Posterior cingulate gyrus (tissue), 11 donors: ENCODE measurements at regions of chr14 and their contacts with region 1.

Region 1: GRCh38 chr14:33184587-33184986 is 245.9 kb downstream of the NPAS3 start:
- DNase-seq: peak in 3 of 10 donors; percentile 12 to 71 (median 32)

Region 2: DNA sequence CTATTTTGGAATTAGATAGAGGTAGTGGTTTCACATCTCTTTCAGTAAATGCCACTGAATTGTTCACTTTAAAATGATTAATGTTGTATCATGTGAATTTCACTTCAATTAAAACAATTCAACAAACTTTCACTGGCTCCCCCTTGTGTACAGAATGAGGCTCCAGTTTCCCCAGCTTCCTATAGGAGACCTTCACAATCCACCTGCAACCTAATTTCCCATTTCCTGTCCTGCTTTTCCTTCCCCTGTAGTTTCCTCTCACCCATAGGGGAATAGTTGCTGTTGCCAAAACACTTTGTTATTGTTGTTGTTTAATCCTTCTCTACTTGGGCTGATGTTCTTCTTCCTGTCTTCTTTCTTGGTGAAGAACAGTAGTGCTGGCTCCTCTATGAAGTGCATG is 186.2 kb before region 1 on chr14:
- intact Hi-C with region 1: no loop called
- DNase-seq: no peak

Region 3: DNA sequence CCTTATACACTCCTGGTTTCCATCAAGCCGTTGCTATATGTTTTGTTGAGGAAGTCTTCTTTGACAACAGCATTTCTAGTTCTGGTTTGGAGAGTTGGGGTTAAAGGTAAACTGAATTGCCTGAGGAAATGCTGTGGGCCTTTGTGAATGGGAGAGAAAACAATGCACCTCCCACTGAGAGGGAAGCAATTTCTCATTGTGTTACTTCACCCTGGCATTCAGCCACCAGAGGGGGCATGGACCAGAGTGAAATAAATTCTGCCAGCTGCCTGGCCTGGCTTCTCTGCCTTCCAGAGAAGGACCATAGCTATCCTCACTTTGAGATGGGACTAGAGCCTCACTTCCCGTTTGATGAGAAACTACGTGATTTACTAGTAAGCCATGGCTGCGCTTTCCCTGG is 291.0 kb after region 1 on chr14:
- intact Hi-C with region 1: loop called (anchors 10 kb)
- DNase-seq: peak; percentile 34 to 88 (median 64)

Region 4: GRCh38 chr14:33642691-33643244 is 458.2 kb after region 1 on chr14:
- intact Hi-C with region 1: no loop called
- DNase-seq: no peak